RWPE1 (cell line): ENCODE measurements at regions of chr19 and their contacts with region 1.

Region 1: GRCh38 chr19:5827891-5828660 is 11.4 kb downstream of the FUT6 start:
- DNase-seq: peak; percentile 98
- H3K27ac ChIP-seq: peak overlapping the region; percentile 89
- CTCF ChIP-seq: no peak

Region 2: GRCh38 chr19:5839065-5840017 is 11.3 kb after region 1 on chr19 and contains the start of gene FUT6:
- CTCF ChIA-PET with region 1: no interaction called
- POLR2A ChIA-PET with region 1: interaction called, 12 read pairs
- DNase-seq: no peak
- H3K27ac ChIP-seq: no peak within 1 kb of the TSS
- CTCF ChIP-seq: no peak

Region 3: DNA sequence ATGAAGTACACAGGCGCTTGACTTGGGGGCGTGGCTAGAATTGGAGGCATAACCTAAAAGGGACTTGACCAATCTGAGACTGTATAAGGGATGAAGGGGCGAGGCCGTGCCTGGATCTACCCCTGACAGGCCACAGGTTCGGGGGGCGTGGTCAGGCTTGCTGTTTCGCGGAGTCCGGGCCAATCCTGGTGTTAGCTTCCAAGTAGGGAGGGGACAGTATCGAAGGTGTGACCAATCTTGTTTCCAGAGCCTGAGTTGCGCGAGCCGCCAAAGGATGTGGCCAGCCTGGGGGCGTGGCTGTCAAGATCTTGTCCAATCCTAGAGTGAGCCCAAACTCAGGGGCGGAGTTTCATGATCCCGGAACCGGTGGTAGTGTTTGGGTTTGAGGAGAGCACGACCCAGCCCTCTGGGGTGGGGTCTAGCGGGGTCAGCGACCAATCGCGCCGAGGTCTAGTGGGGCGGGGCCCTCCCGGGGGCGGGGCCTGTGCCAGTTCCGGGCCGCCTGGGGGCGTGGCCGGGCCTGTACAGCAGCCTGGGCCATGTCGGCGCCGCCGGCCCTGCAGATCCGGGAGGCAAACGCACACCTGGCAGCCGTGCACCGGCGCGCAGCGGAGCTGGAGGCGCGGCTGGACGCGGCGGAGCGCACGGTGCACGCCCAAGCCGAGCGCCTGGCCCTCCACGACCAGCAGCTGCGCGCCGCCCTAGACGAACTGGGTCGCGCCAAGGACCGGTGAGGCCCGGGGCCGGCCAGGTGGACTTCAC is 76.5 kb after region 1 on chr19 and contains the start of gene VMAC:
- CTCF ChIA-PET with region 1: no interaction called
- POLR2A ChIA-PET with region 1: interaction called, 14 read pairs
- DNase-seq: peak; percentile 99
- H3K27ac ChIP-seq: peak within 1 kb of the TSS; percentile 96
- CTCF ChIP-seq: no peak